ENCODE measurements at regions of chr14 and their contacts with region 1.

Region 1: DNA sequence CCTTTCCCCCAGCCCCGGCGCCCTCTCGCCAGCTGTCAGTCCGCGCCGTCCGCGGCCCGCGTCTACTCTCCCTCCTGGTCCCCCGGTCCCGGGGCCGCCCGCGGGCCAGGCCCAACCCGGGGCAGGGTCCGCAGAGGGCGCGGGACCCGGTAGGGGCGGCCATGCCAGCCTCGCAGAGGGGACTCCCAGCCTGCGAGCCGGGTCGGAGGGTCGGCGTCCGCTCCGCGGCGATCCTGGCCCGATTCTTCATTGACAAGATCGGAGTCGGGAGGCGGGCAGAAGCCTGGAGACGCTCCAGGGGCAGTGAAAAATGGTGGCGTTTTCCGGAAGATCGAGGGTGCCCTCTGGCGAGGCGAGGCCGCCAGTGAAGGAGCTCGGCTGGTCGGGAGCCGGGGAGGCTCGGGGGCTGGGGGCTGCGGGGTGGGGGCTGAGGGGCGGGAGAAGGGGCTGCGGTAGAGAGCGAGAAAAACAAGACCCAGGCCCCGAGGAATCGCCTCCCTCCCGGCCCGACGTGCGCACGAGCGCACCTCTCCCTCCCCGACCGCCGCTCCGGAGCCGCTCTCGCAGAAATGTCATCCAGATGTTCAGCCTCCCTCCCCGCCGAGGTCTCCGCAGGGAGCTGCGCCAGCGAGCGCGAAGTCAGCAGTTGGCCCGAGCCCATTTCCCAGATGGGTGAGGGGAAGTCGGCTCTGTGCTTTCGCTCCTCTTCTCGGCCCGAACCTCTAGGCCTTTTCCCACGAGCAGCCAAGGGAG is 647 bp upstream of the TGFB3 start:
- DNase-seq: peak; percentile 84
- H3K4me3 ChIP-seq: peak overlapping the region; percentile 56 to 93 (median 70)
- H3K27ac ChIP-seq: peak overlapping the region; percentile 92 to 95 (median 92)
- H3K4me1 ChIP-seq: peaks cover 14 to 61% (median 36%) of the 10 kb centered on the region in 4 donors
- H3K27me3 ChIP-seq: no peaks in the 10 kb centered on the region
- CTCF ChIP-seq: peak; percentile 61 to 83 (median 67)
- EP300 ChIP-seq: no peak
- POLR2A ChIP-seq: no peak

Region 2: GRCh38 chr14:75711104-75711795 is 271.2 kb before region 1 on chr14:
- in situ Hi-C with region 1: loop called (anchors 5 to 10 kb)
- intact Hi-C with region 1: loop called (anchors 2 kb)
- DNase-seq: no peak
- H3K4me3 ChIP-seq: no peak overlapping the region
- H3K27ac ChIP-seq: peak overlapping the region; percentile 46 to 80 (median 74)
- H3K4me1 ChIP-seq: peaks cover 4 to 14% (median 6%) of the 10 kb centered on the region in 4 donors
- H3K27me3 ChIP-seq: no peaks in the 10 kb centered on the region
- CTCF ChIP-seq: peak; percentile 44 to 65 (median 47)
- EP300 ChIP-seq: no peak
- POLR2A ChIP-seq: no peak

Region 3: GRCh38 chr14:75769047-75769685 is 213.3 kb before region 1 on chr14:
- in situ Hi-C with region 1: no loop called
- intact Hi-C with region 1: no loop called
- DNase-seq: no peak
- H3K4me3 ChIP-seq: no peak overlapping the region
- H3K27ac ChIP-seq: no peak overlapping the region
- H3K4me1 ChIP-seq: no peaks in the 10 kb centered on the region
- H3K27me3 ChIP-seq: no peaks in the 10 kb centered on the region
- CTCF ChIP-seq: no peak
- EP300 ChIP-seq: no peak
- POLR2A ChIP-seq: no peak

Region 4: DNA sequence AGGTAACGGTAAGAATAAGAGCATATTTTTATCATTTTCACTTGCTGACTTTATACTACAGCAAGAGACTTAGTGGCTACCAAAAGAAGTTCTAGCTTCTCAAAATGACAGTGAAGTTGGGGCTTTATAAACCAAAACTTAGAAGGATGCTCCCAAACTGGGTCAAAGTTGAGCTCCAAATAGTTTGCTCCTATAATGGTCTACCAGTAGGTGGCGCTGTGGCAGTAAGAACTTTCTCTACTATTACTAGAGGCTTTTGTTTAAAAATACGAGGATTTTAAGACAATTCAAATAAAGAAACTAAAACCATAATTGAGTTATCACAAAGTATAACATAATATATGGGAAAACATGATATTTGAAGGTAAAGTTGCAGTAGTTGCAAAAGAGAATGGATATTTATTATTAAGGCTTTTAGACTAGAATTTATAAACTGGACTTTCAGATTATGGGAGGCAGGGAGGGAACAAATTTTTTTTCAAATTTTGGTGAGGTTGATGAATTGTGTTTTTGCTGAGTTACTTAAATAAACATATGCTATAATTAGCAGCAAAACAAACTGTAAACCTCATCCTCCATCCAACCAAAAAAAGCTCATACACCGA is 75.7 kb before region 1 on chr14:
- in situ Hi-C with region 1: loop called in 2 of 4 experiments (anchors 10 kb)
- intact Hi-C with region 1: loop called (anchors 5 kb)
- DNase-seq: peak; percentile 68
- H3K4me3 ChIP-seq: no peak overlapping the region
- H3K27ac ChIP-seq: peak overlapping the region in 1 of 4 donors; percentile 7
- H3K4me1 ChIP-seq: peaks cover 0 to 31% (median 3%) of the 10 kb centered on the region in 4 donors
- H3K27me3 ChIP-seq: no peaks in the 10 kb centered on the region
- CTCF ChIP-seq: peak; percentile 83 to 94 (median 91)
- EP300 ChIP-seq: no peak
- POLR2A ChIP-seq: no peak

Measured in transverse colon (tissue), 4 donors.